ENCODE measurements at regions of chr11 and their contacts with region 1.

Region 1: GRCh38 chr11:123145220-123145619 is 49.8 kb downstream of the CLMP start:
- DNase-seq: peak; percentile 66
- H3K4me3 ChIP-seq: peak overlapping the region; percentile 21 to 49; a peak in 3 of 4 replicates
- H3K27ac ChIP-seq: peak overlapping the region; percentile 87 to 95
- H3K4me1 ChIP-seq: peaks cover 9 to 17% of the 10 kb centered on the region in 2 experiments
- H3K27me3 ChIP-seq: no peaks in the 10 kb centered on the region
- CTCF ChIP-seq: no peak
- EP300 ChIP-seq: peak in 1 of 2 experiments; percentile 29; a peak in 1 of 4 replicates
- RAD21 ChIP-seq: no peak

Region 2: GRCh38 chr11:123020968-123021367 is 124.3 kb before region 1 on chr11:
- CTCF ChIA-PET with region 1: no interaction called
- POLR2A ChIA-PET with region 1: no interaction called
- DNase-seq: peak; percentile 76
- H3K4me3 ChIP-seq: no peak overlapping the region
- H3K27ac ChIP-seq: no peak overlapping the region
- H3K4me1 ChIP-seq: no peaks in the 10 kb centered on the region
- H3K27me3 ChIP-seq: 0 out of 2 replicates have a peak, but pooled peaks cover 4% of the 10 kb centered on the region
- CTCF ChIP-seq: peak; percentile 63
- EP300 ChIP-seq: no peak
- RAD21 ChIP-seq: peak; percentile 78

Region 3: DNA sequence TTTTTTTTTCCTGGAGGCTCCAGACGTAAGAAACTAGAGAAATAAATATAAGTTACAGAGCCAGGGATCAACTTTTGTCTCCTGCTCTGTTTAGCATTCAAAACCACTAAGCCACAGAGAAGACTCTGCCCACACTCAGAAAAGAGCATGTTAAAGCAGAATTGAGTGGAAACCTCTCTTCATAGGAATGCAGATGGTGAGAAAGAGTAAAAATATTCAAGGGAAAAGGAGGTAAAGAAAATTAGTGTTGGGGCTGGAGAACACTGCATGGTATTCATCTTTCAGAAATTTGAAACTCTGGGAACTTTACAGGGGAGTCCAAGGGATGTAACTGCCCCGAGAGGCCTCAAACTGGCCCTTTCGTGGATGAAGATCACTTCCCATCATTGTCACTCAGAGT is 15.3 kb before region 1 on chr11:
- CTCF ChIA-PET with region 1: no interaction called
- POLR2A ChIA-PET with region 1: no interaction called
- DNase-seq: no peak
- H3K4me3 ChIP-seq: no peak overlapping the region
- H3K27ac ChIP-seq: peak overlapping the region; percentile 65 to 98
- H3K4me1 ChIP-seq: peaks cover 4 to 37% of the 10 kb centered on the region in 2 experiments; a peak in 3 of 4 replicates
- H3K27me3 ChIP-seq: no peaks in the 10 kb centered on the region
- CTCF ChIP-seq: no peak
- EP300 ChIP-seq: no peak
- RAD21 ChIP-seq: no peak

Region 4: DNA sequence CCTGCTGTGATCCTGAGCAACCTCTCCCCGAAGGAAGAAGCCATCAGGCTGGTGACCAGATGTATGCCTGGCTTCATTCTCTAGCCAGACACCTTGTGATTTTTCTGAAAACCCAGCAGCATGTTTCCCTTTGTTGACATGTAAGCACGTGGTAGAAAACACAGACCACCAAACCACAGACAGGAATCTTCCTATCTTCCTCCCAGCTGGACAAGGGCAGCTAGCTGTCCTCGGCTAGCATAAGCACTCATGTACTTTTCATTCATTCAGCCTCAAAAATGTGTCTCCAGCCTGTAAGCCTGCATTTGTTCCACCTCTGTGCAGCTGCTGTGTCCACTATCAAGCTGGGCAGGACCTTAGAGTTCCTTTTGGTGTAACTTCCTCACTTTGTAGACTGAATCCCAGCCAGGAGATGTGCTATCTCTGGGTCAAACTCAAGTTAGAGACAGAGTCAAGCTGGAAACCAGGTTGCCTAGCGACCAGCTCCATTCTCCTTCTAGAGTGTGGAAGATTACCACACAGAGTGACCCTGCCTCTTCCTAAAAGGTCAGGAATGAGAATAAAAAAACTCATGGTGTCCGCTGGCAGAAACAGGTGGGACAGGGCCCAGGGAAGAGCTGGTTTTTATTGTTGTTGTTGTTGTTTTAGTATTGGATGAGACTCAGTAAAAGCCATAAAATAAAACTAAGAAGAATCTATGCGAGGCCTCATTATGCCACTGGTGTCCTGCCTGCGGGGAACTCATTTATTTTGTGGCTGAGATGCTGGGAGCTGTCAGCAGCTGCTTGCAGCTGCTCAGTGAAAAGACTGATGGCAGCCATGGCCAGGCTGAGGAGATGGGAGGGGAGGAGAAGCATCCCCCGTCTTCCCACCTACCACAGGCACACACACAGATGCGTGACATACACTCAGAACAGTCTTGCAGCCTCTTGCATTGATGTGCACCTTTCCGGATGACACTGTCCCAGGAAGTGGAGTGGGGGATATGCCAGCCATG is 57.2 kb after region 1 on chr11:
- CTCF ChIA-PET with region 1: no interaction called
- POLR2A ChIA-PET with region 1: interaction called, 13 read pairs
- DNase-seq: peak; percentile 59
- H3K4me3 ChIP-seq: no peak overlapping the region; a peak in 1 of 4 replicates
- H3K27ac ChIP-seq: peak overlapping the region; percentile 29 to 98
- H3K4me1 ChIP-seq: peaks cover 39 to 48% of the 10 kb centered on the region in 2 experiments
- H3K27me3 ChIP-seq: no peaks in the 10 kb centered on the region
- CTCF ChIP-seq: no peak
- EP300 ChIP-seq: no peak
- RAD21 ChIP-seq: no peak

Region 5: DNA sequence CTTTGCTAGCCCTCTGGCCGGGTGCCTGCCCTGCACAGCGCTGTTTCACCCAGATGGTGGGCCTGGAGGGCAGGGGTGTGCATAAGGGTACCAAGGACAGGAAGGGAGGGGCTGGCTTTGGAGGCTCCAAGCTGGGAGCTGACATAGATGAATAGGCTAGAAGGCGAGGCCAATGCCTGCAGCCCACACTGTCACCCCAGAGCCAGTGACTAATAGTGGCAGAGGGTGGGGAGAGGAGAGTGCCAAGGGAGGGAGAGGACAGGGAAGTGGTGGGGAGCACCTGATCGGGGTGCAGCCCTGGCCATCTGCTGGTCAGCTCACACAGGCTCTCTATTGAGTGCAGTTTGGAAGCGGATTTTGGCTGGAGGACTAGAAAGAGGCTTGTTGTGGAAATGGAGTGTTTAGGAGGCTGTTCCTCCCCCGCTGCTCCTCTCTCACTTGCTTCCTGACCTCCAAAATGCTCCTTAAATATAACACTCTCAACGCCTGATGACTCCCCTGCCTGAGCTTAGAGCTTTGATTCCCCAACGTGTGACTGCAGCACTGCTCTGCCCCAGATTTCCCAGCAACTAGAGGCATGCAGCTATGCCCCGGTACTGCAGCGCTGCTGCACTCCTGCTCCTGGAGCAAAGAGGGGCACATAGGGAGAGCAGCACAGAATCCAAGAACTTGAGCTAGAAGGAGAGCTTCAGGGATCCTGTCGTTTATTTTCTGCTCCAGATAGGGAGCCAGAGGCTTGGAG is 374.0 kb after region 1 on chr11:
- CTCF ChIA-PET with region 1: no interaction called
- POLR2A ChIA-PET with region 1: no interaction called
- DNase-seq: peak; percentile 55
- H3K4me3 ChIP-seq: no peak overlapping the region
- H3K27ac ChIP-seq: peak overlapping the region in 1 of 2 experiments; percentile 11; a peak in 1 of 4 replicates
- H3K4me1 ChIP-seq: peaks cover 0 to 16% of the 10 kb centered on the region in 2 experiments; a peak in 1 of 4 replicates
- H3K27me3 ChIP-seq: no peaks in the 10 kb centered on the region
- CTCF ChIP-seq: no peak
- EP300 ChIP-seq: no peak
- RAD21 ChIP-seq: no peak